Activated CD8-positive, alpha-beta T cell treated with anti-CD3 and anti-CD28 coated beads, Interleukin-2, amount 10 ng/mL, durations not matched to agents 7 days and 5 days (primary cell): ENCODE measurements at regions of chr7 and their contacts with region 1.

Region 1: GRCh38 chr7:100803398-100804233 is 23.7 kb downstream of the EPHB4 start:
- DNase-seq: peak; percentile 63
- ATAC-seq: peak; percentile 74
- H3K4me3 Mint-ChIP-seq: no peak overlapping the region
- H3K27ac Mint-ChIP-seq: no peak overlapping the region
- H3K4me1 Mint-ChIP-seq: peaks cover 13% of the 10 kb centered on the region
- H3K27me3 Mint-ChIP-seq: no peaks in the 10 kb centered on the region

Region 2: GRCh38 chr7:100837099-100837836 is 33.7 kb after region 1 on chr7:
- CTCF ChIA-PET with region 1: interaction called, 12 read pairs
- POLR2A ChIA-PET with region 1: no interaction called
- DNase-seq: peak; percentile 73
- ATAC-seq: peak; percentile 92
- H3K4me3 Mint-ChIP-seq: peak overlapping the region; percentile 70
- H3K27ac Mint-ChIP-seq: peak overlapping the region; percentile 70
- H3K4me1 Mint-ChIP-seq: peaks cover 16% of the 10 kb centered on the region
- H3K27me3 Mint-ChIP-seq: peaks cover 3% of the 10 kb centered on the region